Naive thymus-derived CD8-positive, alpha-beta T cell (primary cell): ENCODE measurements at regions of chr19 and their contacts with region 1.

Region 1: DNA sequence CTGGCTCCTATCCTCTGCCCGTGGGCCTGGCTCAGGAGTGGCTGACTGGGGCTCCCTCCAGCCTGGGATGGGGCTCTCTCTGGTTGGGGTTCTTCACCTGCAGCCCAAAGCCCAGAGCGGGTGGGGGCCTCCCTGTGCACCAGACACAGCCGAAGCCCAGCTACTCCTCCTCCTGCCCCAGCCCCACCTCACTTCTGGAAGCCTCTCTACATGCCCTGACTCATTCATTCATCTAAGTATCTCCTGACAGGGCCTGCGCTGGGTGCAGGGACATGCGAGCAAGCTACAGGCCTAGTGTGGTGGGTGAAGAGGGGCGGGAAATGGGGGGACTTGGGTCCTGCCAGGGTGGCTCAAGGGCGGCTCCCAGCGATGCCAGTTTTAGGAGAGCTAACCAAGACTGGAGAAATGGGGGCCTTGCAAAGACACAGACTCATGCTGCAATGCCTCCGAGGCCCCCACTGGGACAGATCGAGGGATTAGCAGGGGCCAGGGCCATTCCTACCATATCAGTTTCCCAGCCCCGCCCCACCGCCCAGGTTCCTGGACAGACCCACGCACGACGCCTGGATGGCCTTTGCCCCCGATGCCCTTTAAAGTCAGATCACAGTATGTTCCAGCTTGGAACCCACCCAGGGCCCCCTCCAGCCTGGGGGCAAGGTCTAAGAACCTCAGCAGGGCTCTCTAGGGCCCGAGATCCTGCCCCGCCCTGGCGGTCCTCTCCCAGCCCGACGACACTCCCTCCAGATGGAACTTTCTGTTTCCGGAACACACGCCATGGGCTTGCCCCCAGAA is 12.6 kb downstream of the LSM4 start:
- DNase-seq: no peak
- ATAC-seq: no peak
- H3K4me3 Mint-ChIP-seq: no peak overlapping the region
- H3K27ac Mint-ChIP-seq: peak overlapping the region in 8 of 10 donors; percentile 19 to 67 (median 38)
- H3K4me1 Mint-ChIP-seq: peaks cover 12 to 52% (median 26%) of the 10 kb centered on the region in 4 donors
- H3K27me3 Mint-ChIP-seq: no peaks in the 10 kb centered on the region

Region 2: GRCh38 chr19:18322759-18323460 is 12.6 kb after region 1 on chr19 and contains the start of gene LSM4:
- POLR2A ChIA-PET with region 1: interaction called, 106 read pairs
- DNase-seq: peak; percentile 95 to 100 (median 99)
- ATAC-seq: peak; percentile 92 to 93
- H3K4me3 Mint-ChIP-seq: peak within 1 kb of the TSS; percentile 81 to 90 (median 86)
- H3K27ac Mint-ChIP-seq: peak within 1 kb of the TSS; percentile 89 to 98 (median 98)
- H3K4me1 Mint-ChIP-seq: peaks cover 29 to 59% (median 56%) of the 10 kb centered on the region in 4 donors
- H3K27me3 Mint-ChIP-seq: no peaks in the 10 kb centered on the region
- polyA plus RNA-seq, gene LSM4: 162 to 198 (median 181) TPM